Endothelial cell of umbilical vein (primary cell): ENCODE measurements at regions of chr21 and their contacts with region 1.

Region 1: GRCh38 chr21:45910543-45911221 is 70.9 kb upstream of the COL6A1 start:
- DNase-seq: no peak
- H3K4me3 ChIP-seq: no peak overlapping the region
- H3K27ac ChIP-seq: no peak overlapping the region
- H3K4me1 ChIP-seq: no peaks in the 10 kb centered on the region
- H3K27me3 ChIP-seq: no peaks in the 10 kb centered on the region
- CTCF ChIP-seq: no peak
- POLR2A ChIP-seq: no peak

Region 2: GRCh38 chr21:45865106-45865832 is 45.4 kb before region 1 on chr21:
- CTCF ChIA-PET with region 1: no interaction called
- POLR2A ChIA-PET with region 1: no interaction called
- dilution Hi-C with region 1: no loop called
- intact Hi-C with region 1: no loop called
- DNase-seq: no peak
- H3K4me3 ChIP-seq: no peak overlapping the region
- H3K27ac ChIP-seq: no peak overlapping the region
- H3K4me1 ChIP-seq: no peaks in the 10 kb centered on the region
- H3K27me3 ChIP-seq: no peaks in the 10 kb centered on the region
- CTCF ChIP-seq: no peak
- POLR2A ChIP-seq: no peak

Region 3: GRCh38 chr21:45880097-45881068 is 30.3 kb before region 1 on chr21:
- CTCF ChIA-PET with region 1: interaction called, 11 read pairs
- POLR2A ChIA-PET with region 1: no interaction called
- dilution Hi-C with region 1: no loop called
- intact Hi-C with region 1: no loop called
- DNase-seq: peak; percentile 44
- H3K4me3 ChIP-seq: no peak overlapping the region
- H3K27ac ChIP-seq: no peak overlapping the region
- H3K4me1 ChIP-seq: no peaks in the 10 kb centered on the region
- H3K27me3 ChIP-seq: no peaks in the 10 kb centered on the region
- CTCF ChIP-seq: peak; percentile 70 to 72
- POLR2A ChIP-seq: no peak

Region 4: DNA sequence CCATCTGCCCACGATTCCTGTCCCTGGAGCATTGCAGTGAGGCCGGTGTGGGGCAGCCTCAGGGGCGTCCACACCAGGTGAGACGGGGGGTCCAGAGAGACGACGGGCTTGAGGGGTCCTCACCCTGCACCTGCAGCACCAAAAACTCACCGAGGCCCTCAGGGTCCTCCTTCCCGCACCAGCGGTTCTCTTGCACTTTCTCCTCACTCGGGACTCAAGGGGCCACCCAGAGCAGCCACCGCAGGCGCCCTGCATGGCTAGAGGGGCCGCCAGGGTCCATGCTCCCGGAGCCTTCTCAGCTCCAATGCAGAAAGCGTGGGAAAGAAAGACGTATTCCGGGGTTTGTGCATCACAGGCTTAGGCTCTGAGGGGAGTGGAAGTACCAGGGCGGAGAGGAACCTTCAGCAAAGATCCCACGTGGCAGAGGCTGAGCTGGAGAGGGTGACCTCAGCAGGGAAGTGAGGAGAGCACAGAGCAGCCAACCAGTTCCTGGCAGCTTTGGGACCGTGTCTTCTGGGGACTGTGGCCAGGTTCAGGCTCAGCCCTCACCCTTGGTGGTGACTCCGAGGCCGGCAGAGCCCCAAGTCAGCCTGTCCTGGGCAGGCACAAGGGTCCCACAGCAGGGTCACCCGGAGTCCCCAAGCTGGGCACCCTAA is 167.8 kb after region 1 on chr21:
- CTCF ChIA-PET with region 1: no interaction called
- POLR2A ChIA-PET with region 1: no interaction called
- dilution Hi-C with region 1: no loop called
- intact Hi-C with region 1: no loop called
- DNase-seq: no peak
- H3K4me3 ChIP-seq: no peak overlapping the region
- H3K27ac ChIP-seq: no peak overlapping the region
- H3K4me1 ChIP-seq: no peaks in the 10 kb centered on the region
- H3K27me3 ChIP-seq: no peaks in the 10 kb centered on the region
- CTCF ChIP-seq: no peak
- POLR2A ChIP-seq: no peak